Activated CD8-positive, alpha-beta T cell treated with anti-CD3 and anti-CD28 coated beads, Interleukin-2, amount 10 ng/mL, durations not matched to agents 7 days and 5 days (primary cell): ENCODE measurements at regions of chr19 and their contacts with region 1.

Region 1: DNA sequence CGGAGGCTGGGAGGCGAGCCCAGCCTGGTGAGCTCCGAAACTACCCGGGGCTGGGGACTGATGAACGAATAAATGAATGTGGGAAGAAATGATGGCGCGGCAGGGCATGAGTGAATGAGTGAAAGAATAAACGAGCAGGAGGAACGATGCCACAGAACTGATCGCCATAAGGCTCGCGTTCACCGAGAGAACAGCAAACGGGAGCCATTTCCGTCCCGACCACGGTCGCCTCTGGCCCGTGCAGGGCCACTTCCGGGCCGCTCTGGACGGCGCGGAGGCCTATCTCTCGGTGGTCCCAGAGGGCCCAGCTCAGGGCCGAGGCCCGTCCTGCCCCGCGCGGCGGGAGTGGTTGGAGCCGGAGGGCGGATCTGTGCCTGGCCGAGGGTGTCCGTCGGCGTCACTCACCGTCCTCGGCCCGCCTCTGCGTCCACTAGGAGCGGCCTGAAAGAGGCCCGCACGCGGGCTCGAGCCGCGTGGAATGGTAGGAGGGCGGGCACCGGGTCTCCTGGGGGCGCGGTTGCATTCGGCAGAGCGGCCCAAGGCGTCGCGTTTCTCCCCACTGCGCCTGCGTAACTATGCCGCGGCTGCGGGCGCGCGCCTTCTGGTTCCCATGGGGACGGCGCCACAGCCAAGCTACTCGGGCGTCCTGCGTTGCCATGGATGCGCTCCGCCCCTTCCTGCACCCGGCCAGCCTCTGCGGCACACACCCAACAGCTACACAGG is at the start of gene ZNF497:
- DNase-seq: peak; percentile 98
- ATAC-seq: peak; percentile 90
- H3K4me3 Mint-ChIP-seq: peak within 1 kb of the TSS; percentile 80
- H3K27ac Mint-ChIP-seq: peak within 1 kb of the TSS; percentile 88
- H3K4me1 Mint-ChIP-seq: peaks cover 23% of the 10 kb centered on the region
- H3K27me3 Mint-ChIP-seq: no peaks in the 10 kb centered on the region
- total RNA-seq, gene ZNF497: 1.5 to 1.7 TPM

Region 2: DNA sequence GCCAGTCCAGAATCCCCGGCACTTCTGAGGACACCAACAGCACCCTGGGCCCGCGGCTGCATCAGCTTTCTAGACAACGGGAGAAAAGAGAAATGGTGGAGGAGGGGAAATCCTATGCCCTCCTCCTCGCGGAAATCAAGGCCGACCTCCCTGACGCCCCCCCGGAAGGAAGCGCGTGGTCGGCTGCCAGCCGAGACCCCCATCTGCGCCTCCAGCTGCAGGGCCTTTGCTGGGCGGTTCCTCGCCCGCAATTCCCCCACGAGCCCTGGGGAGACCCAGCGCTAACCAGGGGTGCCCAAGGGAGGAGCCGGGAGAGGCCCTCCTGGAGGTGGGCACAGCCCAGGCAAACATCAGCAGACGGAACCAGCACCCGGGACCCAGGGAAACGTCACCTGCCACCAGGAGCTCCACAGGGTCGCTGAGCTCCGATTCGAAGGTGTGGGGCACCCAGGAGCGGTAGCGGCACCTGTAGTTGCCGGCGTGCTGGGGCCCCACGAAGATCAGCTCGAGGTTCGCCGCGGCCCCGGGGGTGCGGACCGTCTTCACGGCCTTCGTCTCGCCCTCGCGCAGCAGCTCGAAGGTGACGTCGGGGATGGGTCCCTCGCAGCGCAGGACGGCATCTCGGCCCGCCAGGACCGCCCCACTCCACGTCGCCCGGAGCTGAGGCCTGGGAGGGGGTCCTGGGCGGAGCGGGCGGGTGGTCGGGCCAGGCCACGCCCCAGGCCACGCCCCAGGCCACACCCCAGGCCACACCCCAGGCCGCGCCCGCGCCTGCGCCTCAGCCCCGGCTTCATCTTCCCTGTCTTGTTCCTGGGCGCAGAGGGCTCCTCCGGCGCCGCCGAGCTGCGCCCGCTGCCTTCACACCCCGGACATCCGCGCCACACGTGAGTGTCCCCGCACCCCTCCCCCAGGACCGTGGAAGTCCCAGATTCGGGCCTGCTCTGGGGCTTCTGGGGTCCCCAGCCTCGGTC is 15.2 kb before region 1 on chr19:
- CTCF ChIA-PET with region 1: interaction called, 3 read pairs
- POLR2A ChIA-PET with region 1: interaction called, 25 read pairs
- DNase-seq: peak; percentile 80
- ATAC-seq: peak; percentile 93
- H3K4me3 Mint-ChIP-seq: peak overlapping the region; percentile 95
- H3K27ac Mint-ChIP-seq: peak overlapping the region; percentile 87
- H3K4me1 Mint-ChIP-seq: peaks cover 31% of the 10 kb centered on the region
- H3K27me3 Mint-ChIP-seq: no peaks in the 10 kb centered on the region

Region 3: GRCh38 chr19:58380722-58381466 is 18.5 kb after region 1 on chr19 and contains the start of gene ZNF837:
- CTCF ChIA-PET with region 1: interaction called, 3 read pairs
- POLR2A ChIA-PET with region 1: interaction called, 15 read pairs
- DNase-seq: peak; percentile 99
- ATAC-seq: peak; percentile 90
- H3K4me3 Mint-ChIP-seq: peak within 1 kb of the TSS; percentile 82
- H3K27ac Mint-ChIP-seq: peak within 1 kb of the TSS; percentile 94
- H3K4me1 Mint-ChIP-seq: peaks cover 39% of the 10 kb centered on the region
- H3K27me3 Mint-ChIP-seq: no peaks in the 10 kb centered on the region
- total RNA-seq, gene ZNF837: 1.3 to 1.5 TPM

Region 4: GRCh38 chr19:58386576-58387337 is 24.3 kb after region 1 on chr19 and contains the start of gene RPS5:
- CTCF ChIA-PET with region 1: no interaction called
- POLR2A ChIA-PET with region 1: interaction called, 11 read pairs
- DNase-seq: peak; percentile 98
- ATAC-seq: peak; percentile 87
- H3K4me3 Mint-ChIP-seq: peak within 1 kb of the TSS; percentile 97
- H3K27ac Mint-ChIP-seq: peak within 1 kb of the TSS; percentile 95
- H3K4me1 Mint-ChIP-seq: peaks cover 58% of the 10 kb centered on the region
- H3K27me3 Mint-ChIP-seq: no peaks in the 10 kb centered on the region
- total RNA-seq, gene RPS5: 1,111 to 1,173 TPM